Activated CD4-positive, alpha-beta memory T cell treated with anti-CD3 and anti-CD28 coated beads for 36 hours (primary cell): ENCODE measurements at regions of chr19 and their contacts with region 1.

Region 1: DNA sequence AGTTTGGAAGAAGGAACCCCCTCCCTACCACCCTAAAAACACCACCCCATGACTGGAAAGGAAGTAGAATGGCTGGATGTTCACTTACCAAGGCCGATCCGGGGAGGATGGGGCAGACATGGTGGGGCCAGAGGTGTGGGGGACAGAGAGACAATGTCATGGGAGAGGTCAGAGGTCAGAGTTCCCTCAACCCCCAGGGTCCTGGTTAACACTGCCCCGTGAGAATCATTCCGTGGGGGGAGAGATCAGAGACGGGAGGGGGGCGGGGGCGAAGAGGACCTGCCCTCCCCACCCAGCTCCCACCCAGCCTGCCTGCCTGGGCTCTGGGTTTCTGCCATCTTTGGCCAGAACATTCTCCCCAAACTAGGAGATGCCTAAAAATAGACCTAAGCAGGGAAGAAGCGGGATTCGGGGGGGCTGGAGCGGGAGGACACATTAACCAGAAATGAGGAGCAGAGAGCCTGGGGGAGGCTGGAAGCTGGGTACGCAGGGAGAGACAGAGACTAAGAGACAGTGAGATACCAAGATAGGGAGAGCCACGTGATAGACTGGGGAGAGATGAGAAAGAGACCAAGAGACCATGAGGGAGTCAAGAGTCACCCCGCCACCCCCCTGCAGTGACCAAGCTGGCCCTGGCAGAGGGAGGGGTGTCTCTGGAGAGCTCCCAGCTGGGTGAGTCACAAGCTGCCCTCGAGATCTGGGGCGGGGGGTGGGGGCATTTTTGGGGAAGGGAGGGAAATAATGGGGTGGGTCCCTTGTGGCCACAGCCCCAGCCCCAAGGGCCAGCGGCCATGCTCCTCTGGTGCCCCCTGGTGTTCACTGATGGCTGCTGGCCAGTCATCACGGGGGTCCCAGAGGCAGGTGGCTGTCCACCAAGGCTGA is 6.1 kb upstream of the KANK2 start:
- DNase-seq: peak; percentile 46
- H3K4me3 Mint-ChIP-seq: no peak overlapping the region
- H3K27ac Mint-ChIP-seq: no peak overlapping the region
- H3K4me1 Mint-ChIP-seq: no peaks in the 10 kb centered on the region
- H3K27me3 Mint-ChIP-seq: peaks cover 3% of the 10 kb centered on the region

Region 2: DNA sequence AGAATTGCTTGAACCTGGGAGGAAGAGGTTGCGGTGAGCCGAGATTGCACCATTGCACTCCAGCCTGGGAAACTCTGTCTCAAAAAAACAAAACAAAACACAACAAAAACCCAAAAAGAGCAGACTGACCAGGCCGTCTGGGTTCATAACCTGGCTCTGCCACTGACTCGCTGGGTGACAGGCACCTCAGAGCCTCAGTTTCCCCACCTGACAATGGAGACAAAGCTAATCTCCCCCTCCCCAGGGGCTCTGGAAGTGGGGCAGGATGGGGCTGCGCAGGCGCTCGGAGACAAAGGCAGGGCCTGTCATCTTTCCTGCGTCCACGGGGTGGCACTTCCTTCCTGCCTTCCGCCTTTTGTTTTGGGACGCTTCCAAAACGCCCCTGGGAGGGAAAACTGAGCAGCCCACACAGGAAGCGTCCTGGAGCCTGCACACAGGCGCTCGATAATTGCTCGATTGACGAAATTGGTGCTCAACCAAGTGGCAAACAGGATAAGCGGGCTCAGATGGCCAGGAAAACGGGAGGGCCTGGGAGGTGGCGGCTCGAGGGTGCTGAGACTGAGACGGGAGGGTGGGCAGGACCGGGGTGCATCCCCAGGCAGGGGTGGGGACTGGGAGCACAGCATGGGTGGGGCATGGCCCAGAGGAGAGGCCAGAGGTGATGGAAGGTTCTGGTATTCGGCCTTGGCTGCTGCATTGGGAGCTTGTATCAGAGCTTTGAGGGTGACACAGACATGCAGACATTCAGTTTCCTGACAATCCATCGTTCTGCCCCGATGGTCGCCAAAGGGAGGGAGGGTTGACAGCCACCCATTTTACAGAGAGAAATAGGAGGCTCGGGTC is 65.7 kb before region 1 on chr19:
- CTCF ChIA-PET with region 1: interaction called, 10 read pairs
- POLR2A ChIA-PET with region 1: no interaction called
- intact Hi-C with region 1: loop called (anchors 1 kb)
- DNase-seq: peak; percentile 71
- H3K4me3 Mint-ChIP-seq: peak overlapping the region; percentile 71
- H3K27ac Mint-ChIP-seq: peak overlapping the region; percentile 49
- H3K4me1 Mint-ChIP-seq: peaks cover 9% of the 10 kb centered on the region
- H3K27me3 Mint-ChIP-seq: no peaks in the 10 kb centered on the region

Region 3: GRCh38 chr19:11179716-11180297 is 23.6 kb before region 1 on chr19:
- CTCF ChIA-PET with region 1: no interaction called
- POLR2A ChIA-PET with region 1: no interaction called
- intact Hi-C with region 1: no loop called
- DNase-seq: peak; percentile 41
- H3K4me3 Mint-ChIP-seq: no peak overlapping the region
- H3K27ac Mint-ChIP-seq: no peak overlapping the region
- H3K4me1 Mint-ChIP-seq: peaks cover 8% of the 10 kb centered on the region
- H3K27me3 Mint-ChIP-seq: peaks cover 5% of the 10 kb centered on the region

Region 4: GRCh38 chr19:11418549-11419506 is 215.4 kb after region 1 on chr19 and contains the start of gene RGL3:
- CTCF ChIA-PET with region 1: no interaction called
- POLR2A ChIA-PET with region 1: no interaction called
- intact Hi-C with region 1: no loop called
- DNase-seq: no peak
- H3K4me3 Mint-ChIP-seq: no peak within 1 kb of the TSS
- H3K27ac Mint-ChIP-seq: no peak within 1 kb of the TSS
- H3K4me1 Mint-ChIP-seq: peaks cover 38% of the 10 kb centered on the region
- H3K27me3 Mint-ChIP-seq: peaks cover 45% of the 10 kb centered on the region
- total RNA-seq, gene RGL3: not detected